ENCODE measurements at regions of chr6 and their contacts with region 1.

Region 1: GRCh38 chr6:134640975-134641429 is 308.9 kb downstream of the ALDH8A1 start:
- DNase-seq: peak; percentile 77 to 90 (median 83)
- ATAC-seq: peak; percentile 89 to 93
- H3K4me3 ChIP-seq: no peak overlapping the region
- H3K27ac ChIP-seq: no peak overlapping the region
- H3K4me1 ChIP-seq: no peaks in the 10 kb centered on the region
- H3K27me3 ChIP-seq: no peaks in the 10 kb centered on the region

Region 2: DNA sequence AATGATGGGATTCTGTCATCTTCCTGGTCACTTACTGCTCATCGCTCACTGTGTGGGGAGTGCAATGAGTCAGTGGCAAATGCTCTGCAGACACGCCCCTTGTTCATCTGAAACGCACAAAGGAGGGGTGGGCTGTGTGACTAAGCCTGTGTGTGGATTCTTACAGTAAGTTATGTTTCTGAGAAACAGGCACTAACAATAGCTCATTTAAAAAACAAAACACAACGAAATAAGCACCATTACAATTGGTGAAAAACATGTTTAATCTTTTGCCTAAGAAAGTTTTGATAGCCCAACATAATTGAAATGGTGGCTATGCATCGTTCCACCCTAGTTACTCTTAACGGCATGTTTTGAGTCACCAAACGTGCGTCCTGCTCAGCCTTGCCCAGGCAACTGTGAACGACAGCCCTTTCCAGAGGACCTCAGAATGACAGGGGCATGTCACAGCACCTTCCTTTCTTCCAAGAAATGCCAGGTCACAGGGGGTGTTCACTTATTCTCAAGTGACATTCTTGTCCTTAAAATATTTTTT is 204.7 kb before region 1 on chr6:
- intact Hi-C with region 1: no loop called
- DNase-seq: peak in 1 of 3 donors; percentile 42
- ATAC-seq: peak; percentile 79 to 91
- H3K4me3 ChIP-seq: no peak overlapping the region
- H3K27ac ChIP-seq: no peak overlapping the region
- H3K4me1 ChIP-seq: no peaks in the 10 kb centered on the region
- H3K27me3 ChIP-seq: no peaks in the 10 kb centered on the region

Region 3: GRCh38 chr6:134537146-134537555 is 103.9 kb before region 1 on chr6:
- intact Hi-C with region 1: loop called in 1 of 4 experiments (anchors 10 kb)
- DNase-seq: no peak
- ATAC-seq: no peak
- H3K4me3 ChIP-seq: no peak overlapping the region
- H3K27ac ChIP-seq: peak overlapping the region; percentile 56
- H3K4me1 ChIP-seq: peaks cover 5% of the 10 kb centered on the region
- H3K27me3 ChIP-seq: no peaks in the 10 kb centered on the region

Region 4: GRCh38 chr6:134822920-134823709 is 182.1 kb after region 1 on chr6:
- intact Hi-C with region 1: loop called in 3 of 4 experiments (anchors 5 to 10 kb)
- DNase-seq: peak; percentile 32 to 69 (median 66)
- ATAC-seq: peak; percentile 77 to 92
- H3K4me3 ChIP-seq: no peak overlapping the region
- H3K27ac ChIP-seq: no peak overlapping the region
- H3K4me1 ChIP-seq: peaks cover 2% of the 10 kb centered on the region
- H3K27me3 ChIP-seq: no peaks in the 10 kb centered on the region